ENCODE measurements at regions of chr13 and their contacts with region 1.

Region 1: GRCh38 chr13:50911937-50912795 is 2.6 kb downstream of the RNASEH2B start:
- DNase-seq: peak; percentile 79
- CTCF ChIP-seq: peak; percentile 84

Region 2: DNA sequence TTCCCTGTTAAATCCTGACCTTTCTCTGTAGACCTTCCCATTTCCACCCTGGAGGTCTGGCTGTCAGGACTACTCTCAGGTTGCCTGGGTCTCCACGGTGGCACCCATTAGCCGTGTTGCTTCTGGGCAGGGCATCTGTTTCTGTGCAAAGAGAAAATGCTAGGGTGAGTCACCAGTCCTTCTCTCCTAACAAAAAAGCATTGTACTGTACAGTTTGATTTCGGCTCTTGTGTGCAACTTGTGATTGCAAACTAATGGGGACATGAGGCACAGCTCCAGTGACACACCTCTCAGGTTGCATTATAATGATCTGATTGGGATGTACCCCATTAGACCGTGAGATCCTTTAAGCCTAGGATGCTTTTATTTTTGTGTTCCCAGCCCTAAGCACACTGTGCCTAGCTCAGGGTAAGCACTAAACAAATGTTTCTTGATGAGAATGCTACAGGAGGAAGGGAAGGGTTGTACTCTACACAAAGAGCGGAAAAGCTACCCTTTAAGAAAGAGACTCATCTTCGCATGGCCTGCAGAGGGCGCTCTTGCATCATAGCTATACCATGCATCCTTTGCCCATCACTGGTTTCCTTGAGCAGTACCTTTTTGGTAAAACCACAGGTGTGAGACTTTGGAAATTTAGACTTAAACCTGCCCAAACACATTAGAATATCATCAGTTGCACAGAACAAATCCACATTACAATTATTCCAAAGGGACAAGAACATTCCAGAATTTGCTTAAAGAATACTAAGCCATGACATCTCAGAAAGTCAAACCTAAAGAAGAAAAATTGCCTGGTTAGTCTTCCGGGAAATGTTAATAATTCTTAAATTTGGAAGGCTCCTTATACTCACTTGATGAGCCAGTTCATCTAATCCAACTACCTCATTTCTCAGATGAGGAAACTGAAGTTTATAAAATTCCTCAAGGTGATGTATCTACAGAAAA is 935.6 kb before region 1 on chr13:
- CTCF ChIA-PET with region 1: interaction called, 41 read pairs
- POLR2A ChIA-PET with region 1: no interaction called
- DNase-seq: peak; percentile 74
- CTCF ChIP-seq: peak; percentile 78

Region 3: GRCh38 chr13:50081679-50082425 is 830.3 kb before region 1 on chr13:
- CTCF ChIA-PET with region 1: interaction called, 54 read pairs
- POLR2A ChIA-PET with region 1: no interaction called
- DNase-seq: peak; percentile 94
- CTCF ChIP-seq: peak; percentile 3

Region 4: GRCh38 chr13:50893211-50893852 is 18.8 kb before region 1 on chr13:
- CTCF ChIA-PET with region 1: interaction called, 41 read pairs
- POLR2A ChIA-PET with region 1: no interaction called
- DNase-seq: peak; percentile 42
- CTCF ChIP-seq: no peak

Region 5: DNA sequence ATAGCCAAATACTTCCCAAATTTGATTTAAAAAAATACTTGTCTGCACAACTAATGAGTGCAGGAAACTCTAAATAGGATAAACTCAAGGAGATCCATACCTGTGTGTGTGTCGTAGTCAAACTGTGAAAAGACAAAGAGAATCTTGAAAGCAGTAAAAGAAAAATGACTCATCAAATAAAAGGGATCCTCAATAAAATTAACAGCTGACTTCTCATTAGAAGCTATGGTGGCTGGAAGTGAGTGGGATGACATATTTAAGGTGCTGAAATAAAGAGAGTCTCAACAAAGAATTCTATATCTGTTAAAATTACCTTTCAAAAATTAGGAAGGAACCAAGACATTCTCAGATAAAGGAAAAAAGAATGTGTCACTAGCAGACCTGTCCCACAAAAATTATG is 11.1 kb after region 1 on chr13:
- CTCF ChIA-PET with region 1: interaction called, 29 read pairs
- POLR2A ChIA-PET with region 1: no interaction called
- DNase-seq: no peak
- CTCF ChIP-seq: no peak

Region 6: GRCh38 chr13:50934735-50935435 is 22.7 kb after region 1 on chr13:
- CTCF ChIA-PET with region 1: interaction called, 19 read pairs
- POLR2A ChIA-PET with region 1: no interaction called
- DNase-seq: no peak
- CTCF ChIP-seq: no peak

Region 7: GRCh38 chr13:50969691-50970090 is 57.5 kb after region 1 on chr13:
- CTCF ChIA-PET with region 1: no interaction called
- POLR2A ChIA-PET with region 1: no interaction called
- DNase-seq: no peak
- CTCF ChIP-seq: no peak

Region 8: DNA sequence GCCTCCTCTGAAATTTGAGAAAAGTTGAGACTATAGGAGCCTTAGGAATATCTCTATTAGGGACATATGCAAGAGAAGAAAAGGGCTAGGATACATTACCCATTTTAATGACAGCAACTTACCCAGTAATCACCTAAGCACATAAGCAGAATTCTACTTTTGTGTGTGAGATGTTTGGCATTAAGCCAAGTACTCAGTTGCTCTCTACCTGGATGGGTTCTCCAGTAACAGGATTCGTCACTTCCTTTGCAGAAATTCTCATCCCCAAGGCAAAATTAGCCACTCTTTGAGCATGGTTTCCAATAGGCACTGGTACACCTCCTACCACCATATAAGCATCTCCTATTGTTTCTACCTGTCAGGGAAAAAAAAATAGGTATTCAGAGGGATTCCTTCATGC is 103.8 kb after region 1 on chr13:
- CTCF ChIA-PET with region 1: no interaction called
- POLR2A ChIA-PET with region 1: no interaction called
- DNase-seq: no peak
- CTCF ChIP-seq: no peak

Region 9: GRCh38 chr13:51093574-51093973 is 181.4 kb after region 1 on chr13:
- CTCF ChIA-PET with region 1: no interaction called
- POLR2A ChIA-PET with region 1: no interaction called
- DNase-seq: no peak
- CTCF ChIP-seq: no peak